ENCODE measurements at regions of chr3 and their contacts with region 1.

Region 1: GRCh38 chr3:178155521-178155920 is 380.7 kb upstream of the KCNMB2 start:
- DNase-seq: no peak
- H3K4me3 ChIP-seq: no peak overlapping the region
- H3K27ac ChIP-seq: no peak overlapping the region
- H3K4me1 ChIP-seq: peaks cover 20% of the 10 kb centered on the region
- H3K27me3 ChIP-seq: no peaks in the 10 kb centered on the region
- CTCF ChIP-seq: no peak
- POLR2A ChIP-seq: no peak

Region 2: DNA sequence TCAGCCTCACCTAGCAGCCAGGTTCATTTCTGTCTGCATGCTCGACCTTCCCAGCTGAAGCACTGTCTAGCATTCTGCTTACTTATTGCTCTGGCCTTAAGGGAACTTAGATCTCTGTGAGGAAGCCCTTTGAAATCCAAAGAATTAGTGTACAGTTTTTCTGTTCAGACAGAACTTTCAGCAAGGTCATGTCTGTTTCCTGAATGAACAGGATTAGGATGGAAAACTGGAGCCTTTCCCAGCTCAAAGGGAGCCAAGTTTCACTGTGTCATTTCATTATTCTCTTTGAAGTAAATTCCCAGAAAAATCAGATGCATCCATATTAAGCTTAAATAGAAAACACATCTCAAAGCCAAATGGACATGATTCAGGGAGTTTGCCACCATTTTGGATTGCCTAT is 76.6 kb before region 1 on chr3:
- CTCF ChIA-PET with region 1: interaction called, 9 read pairs
- POLR2A ChIA-PET with region 1: no interaction called
- dilution Hi-C with region 1: no loop called
- intact Hi-C with region 1: loop called (anchors 1 kb)
- DNase-seq: peak; percentile 99
- H3K4me3 ChIP-seq: no peak overlapping the region
- H3K27ac ChIP-seq: peak overlapping the region; percentile 81
- H3K4me1 ChIP-seq: peaks cover 26% of the 10 kb centered on the region
- H3K27me3 ChIP-seq: no peaks in the 10 kb centered on the region
- CTCF ChIP-seq: no peak
- POLR2A ChIP-seq: no peak

Region 3: DNA sequence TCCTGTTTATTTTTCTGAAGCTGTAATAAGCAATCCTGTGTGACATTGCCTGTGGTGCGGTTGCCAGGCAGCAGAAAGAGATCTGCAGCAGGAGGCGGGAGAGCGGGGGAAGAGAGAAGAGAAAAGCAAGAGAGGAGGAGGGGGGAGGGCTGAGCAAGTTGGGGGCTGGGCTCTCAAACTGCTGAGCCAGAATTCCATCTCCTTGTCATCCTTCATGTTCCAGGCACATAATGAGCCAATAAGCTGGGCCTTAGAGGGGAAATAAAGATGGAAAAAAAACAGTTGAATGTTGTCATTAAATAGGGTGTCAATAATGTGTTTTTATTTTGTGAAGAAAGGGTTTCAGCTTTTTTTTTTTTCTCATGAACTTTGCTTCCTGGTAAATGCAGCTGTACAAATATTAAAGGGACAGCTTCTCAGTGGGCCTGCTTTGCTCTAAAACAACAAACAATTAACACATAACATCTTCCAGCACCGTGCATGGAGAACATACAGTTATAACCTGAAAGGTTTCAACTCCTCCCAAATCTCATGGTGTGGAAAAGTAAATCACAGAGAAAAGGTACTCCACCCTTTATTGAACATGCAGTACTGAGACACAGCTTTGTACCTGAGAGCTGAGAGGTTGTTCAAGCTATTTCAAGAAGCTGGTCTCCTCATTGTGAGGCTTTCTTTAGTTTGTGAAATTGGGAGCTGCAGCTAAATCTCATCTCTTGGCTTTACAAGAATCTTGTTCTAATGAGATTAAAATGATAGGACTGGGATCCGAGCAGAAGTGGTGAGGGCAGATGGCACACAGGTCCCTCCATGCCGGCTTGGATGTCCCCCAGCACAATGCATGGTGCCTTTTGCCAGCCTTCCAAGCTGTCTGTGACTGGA is 70.3 kb before region 1 on chr3:
- CTCF ChIA-PET with region 1: interaction called, 7 read pairs
- POLR2A ChIA-PET with region 1: no interaction called
- dilution Hi-C with region 1: no loop called
- intact Hi-C with region 1: loop called (anchors 2 kb)
- DNase-seq: peak; percentile 86
- H3K4me3 ChIP-seq: no peak overlapping the region
- H3K27ac ChIP-seq: peak overlapping the region; percentile 8
- H3K4me1 ChIP-seq: peaks cover 24% of the 10 kb centered on the region
- H3K27me3 ChIP-seq: no peaks in the 10 kb centered on the region
- CTCF ChIP-seq: no peak
- POLR2A ChIP-seq: no peak

Region 4: DNA sequence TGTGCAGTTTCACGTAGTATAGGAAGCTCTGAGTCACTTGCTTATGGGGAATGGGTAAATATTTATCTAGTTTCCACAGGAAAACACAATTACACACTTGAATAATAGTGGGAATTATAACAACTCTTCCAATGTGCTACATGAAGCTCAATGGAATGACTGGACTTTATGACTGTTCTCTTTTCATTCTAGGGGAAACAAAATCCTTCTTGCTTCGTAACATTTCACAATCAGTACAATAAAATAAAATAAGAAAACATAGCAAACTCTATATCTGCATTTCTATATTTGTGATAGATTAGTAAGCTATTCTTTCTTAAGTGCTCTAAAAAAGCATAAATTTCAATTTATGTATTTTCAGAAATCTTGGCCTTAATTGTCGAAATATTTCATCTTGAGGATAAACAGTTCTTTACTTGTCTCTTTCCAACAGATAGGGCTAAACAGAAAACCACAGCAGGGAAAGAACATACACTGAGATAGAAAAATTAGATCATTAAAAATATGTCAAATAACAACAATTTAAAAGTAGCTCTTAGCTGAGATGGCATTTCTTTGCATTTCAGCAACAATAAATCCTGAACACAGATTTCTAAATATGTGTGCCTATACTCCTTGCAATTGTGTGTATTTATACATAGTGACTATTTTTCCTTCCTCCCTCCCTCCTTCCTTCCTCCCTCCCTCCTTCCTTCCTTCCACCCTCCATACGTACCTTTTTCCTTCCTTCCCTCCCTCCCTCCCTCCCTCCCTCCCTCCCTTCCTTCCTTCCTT is 14.8 kb before region 1 on chr3:
- CTCF ChIA-PET with region 1: interaction called, 15 read pairs
- POLR2A ChIA-PET with region 1: no interaction called
- dilution Hi-C with region 1: no loop called
- intact Hi-C with region 1: loop called (anchors 1 kb)
- DNase-seq: peak; percentile 74
- H3K4me3 ChIP-seq: no peak overlapping the region
- H3K27ac ChIP-seq: peak overlapping the region; percentile 60
- H3K4me1 ChIP-seq: peaks cover 10% of the 10 kb centered on the region
- H3K27me3 ChIP-seq: no peaks in the 10 kb centered on the region
- CTCF ChIP-seq: no peak
- POLR2A ChIP-seq: no peak

Region 5: DNA sequence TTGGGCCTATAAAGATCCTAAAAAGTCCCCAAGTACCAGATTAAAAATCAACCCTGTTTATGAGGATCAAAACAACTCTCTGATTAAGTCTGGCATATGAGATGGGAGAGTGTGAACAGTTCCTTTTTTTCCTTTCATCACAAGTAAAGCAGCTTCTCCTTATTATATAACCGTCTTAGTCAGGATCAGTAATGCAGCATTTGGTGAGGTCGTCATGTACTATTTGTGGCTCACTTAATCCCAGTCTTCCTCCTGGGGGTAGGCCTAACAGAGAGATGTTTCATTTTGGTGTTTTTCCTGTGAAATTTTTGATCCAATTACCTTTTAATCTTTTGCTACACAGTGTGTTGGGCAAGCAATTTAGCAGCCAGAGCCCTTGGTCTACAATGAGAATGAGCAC is 47.6 kb after region 1 on chr3:
- CTCF ChIA-PET with region 1: no interaction called
- POLR2A ChIA-PET with region 1: no interaction called
- dilution Hi-C with region 1: no loop called
- intact Hi-C with region 1: loop called (anchors 1 kb)
- DNase-seq: no peak
- H3K4me3 ChIP-seq: no peak overlapping the region
- H3K27ac ChIP-seq: no peak overlapping the region
- H3K4me1 ChIP-seq: peaks cover 14% of the 10 kb centered on the region
- H3K27me3 ChIP-seq: no peaks in the 10 kb centered on the region
- CTCF ChIP-seq: no peak
- POLR2A ChIP-seq: no peak